ENCODE measurements at regions of chr17 and their contacts with region 1.

Region 1: GRCh38 chr17:39980351-39981206 is at the start of gene PSMD3:
- DNase-seq: peak; percentile 99
- H3K4me3 Mint-ChIP-seq: peak within 1 kb of the TSS; percentile 95
- H3K27ac Mint-ChIP-seq: peak within 1 kb of the TSS; percentile 88
- H3K4me1 Mint-ChIP-seq: peaks cover 30% of the 10 kb centered on the region
- H3K27me3 Mint-ChIP-seq: peaks cover 6% of the 10 kb centered on the region
- total RNA-seq, gene PSMD3: 120 to 124 TPM

Region 2: DNA sequence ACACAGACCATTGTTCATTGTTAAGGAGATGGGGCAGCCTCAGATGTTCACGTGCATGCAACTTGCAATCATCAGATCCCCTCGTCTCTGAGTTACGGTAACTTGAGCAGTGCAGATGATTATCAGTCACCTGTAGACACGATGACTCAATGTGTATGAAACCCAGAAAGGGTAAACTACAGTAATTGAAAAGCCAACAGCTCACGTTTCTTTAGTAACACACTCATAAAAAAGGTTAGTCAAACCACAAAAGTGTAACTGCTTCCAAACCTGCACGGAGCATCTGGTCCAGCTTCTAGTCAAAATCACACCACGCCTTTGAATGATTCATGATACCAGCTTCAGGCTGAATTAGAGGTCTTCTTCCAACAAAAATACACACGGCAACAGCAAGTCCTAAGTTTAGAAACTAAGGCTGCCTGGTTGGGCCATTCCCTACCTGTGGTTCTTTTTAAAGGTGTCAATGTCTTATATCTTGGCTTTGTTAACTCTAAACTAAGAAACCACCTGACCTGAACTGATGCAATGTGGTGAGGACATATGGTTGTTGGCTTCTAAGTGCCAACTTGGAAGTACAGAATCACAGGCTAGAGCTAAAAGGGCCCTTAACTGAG is 210.5 kb before region 1 on chr17:
- CTCF ChIA-PET with region 1: no interaction called
- POLR2A ChIA-PET with region 1: no interaction called
- intact Hi-C with region 1: loop called (anchors 5 kb)
- DNase-seq: peak; percentile 82
- H3K4me3 Mint-ChIP-seq: no peak overlapping the region
- H3K27ac Mint-ChIP-seq: peak overlapping the region; percentile 85
- H3K4me1 Mint-ChIP-seq: peaks cover 96% of the 10 kb centered on the region
- H3K27me3 Mint-ChIP-seq: no peaks in the 10 kb centered on the region

Region 3: DNA sequence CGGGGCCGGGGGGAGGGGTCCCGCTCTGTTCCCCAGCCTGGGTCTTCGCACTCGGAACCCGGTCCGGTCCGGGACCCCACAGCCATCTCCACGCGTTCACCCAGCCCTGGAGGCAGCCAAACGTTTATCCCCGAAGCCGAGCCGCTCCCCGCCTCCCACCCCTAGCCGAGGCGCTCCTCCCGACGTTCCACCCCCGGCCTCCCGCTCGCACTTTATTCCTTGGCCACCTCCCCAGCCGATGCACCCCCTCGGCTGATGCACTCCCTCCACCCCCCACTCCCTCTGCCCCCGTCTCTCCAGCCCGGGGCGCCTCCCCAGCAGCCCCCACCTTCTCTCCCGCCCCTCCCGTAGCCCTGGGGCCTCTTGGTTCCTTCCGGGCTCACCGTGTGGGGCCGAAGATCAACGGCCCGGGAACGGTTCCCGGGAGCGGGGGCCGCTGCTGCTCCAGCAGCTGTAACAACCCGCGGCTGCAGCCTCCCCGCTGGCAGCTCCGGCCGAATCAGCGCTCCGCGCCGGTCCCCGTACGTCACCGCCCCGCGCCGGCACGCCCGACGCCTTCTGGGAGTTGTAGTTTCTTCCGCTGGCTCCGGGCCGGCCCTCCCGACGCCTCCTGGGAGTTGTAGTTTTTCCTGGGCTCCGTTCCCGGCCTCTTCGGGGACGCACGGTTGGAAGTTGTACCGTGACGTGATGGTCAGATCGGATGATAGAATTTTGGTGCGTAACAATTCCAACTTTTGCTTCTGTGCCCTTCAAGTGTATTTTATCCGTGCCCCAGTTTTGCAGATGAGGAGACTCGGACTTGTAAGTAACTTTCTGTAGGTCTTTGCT is 53.3 kb before region 1 on chr17 and contains the starts of genes LRRC3C and ORMDL3:
- CTCF ChIA-PET with region 1: no interaction called
- POLR2A ChIA-PET with region 1: interaction called, 6 read pairs
- intact Hi-C with region 1: loop called (anchors 1 kb)
- DNase-seq: peak; percentile 95
- H3K4me3 Mint-ChIP-seq: peak within 1 kb of the TSS; percentile 85
- H3K27ac Mint-ChIP-seq: peak within 1 kb of the TSS; percentile 90
- H3K4me1 Mint-ChIP-seq: peaks cover 52% of the 10 kb centered on the region
- H3K27me3 Mint-ChIP-seq: no peaks in the 10 kb centered on the region
- total RNA-seq, gene LRRC3C: not detected
- total RNA-seq, gene ORMDL3: 53.7 to 58.3 TPM

Region 4: DNA sequence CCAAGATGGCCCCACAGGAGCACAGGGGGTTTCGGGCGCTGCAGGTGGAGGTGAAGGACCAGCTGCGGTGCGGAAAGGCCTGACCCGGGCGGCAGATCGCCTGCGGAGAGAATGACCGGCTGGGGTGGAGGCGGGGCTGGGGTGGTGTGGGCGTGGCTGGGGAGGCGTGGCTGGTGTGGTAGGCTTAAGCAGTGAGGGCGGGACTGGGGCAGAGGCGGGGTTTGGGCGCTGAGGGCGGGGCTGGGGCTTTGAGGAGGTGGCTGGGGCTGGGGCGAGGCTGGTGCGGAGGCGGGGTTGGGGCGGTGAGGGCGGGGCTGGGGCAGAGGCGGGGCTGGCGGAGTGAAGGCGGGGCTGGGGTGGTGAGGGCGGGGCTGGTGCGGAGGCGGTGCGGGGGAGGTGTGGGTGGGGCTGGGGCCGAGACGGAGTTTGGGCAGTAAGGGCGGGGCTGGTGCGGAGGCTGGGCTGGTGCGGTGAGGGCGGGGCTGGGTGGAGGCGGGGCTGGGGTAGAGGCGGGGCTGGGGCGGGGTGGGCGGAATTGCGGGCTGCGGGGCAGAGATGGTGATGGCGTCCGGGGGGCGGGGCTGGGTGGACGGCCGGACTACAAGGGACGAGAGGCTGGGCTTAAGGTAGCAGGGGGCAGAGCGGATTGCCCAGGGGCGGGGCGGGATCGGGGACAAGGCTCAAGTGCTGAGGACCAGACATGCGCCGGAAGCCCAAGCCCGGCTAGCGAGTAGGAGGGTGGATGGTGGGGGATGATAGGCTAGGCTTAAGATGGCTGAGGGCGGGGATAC is 27.7 kb before region 1 on chr17:
- CTCF ChIA-PET with region 1: interaction called, 77 read pairs
- POLR2A ChIA-PET with region 1: no interaction called
- intact Hi-C with region 1: loop called (anchors 1 kb)
- DNase-seq: peak; percentile 98
- H3K4me3 Mint-ChIP-seq: peak overlapping the region; percentile 76
- H3K27ac Mint-ChIP-seq: peak overlapping the region; percentile 73
- H3K4me1 Mint-ChIP-seq: peaks cover 6% of the 10 kb centered on the region
- H3K27me3 Mint-ChIP-seq: no peaks in the 10 kb centered on the region

Region 5: DNA sequence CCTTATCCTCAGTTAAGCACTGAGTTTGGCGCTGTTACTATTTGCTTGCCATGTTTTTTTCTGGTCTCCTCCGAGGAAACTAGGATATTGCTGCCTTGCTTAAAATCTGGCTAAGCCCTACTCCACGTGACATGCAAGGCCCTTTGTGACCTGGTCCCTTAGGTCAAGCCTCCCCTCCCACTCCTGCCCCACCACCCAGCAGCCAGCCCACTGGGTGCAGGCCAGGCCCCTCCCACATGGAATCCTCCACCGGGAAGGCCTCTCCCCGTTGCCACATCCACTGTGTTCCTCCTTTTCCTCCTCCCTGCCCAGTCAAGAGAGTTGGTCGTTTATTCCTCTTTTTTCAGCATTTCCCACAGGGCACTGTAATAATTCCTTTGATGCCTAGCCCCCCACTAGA is 16.2 kb after region 1 on chr17:
- CTCF ChIA-PET with region 1: no interaction called
- POLR2A ChIA-PET with region 1: no interaction called
- intact Hi-C with region 1: no loop called
- DNase-seq: no peak
- H3K4me3 Mint-ChIP-seq: no peak overlapping the region
- H3K27ac Mint-ChIP-seq: no peak overlapping the region
- H3K4me1 Mint-ChIP-seq: peaks cover 5% of the 10 kb centered on the region
- H3K27me3 Mint-ChIP-seq: no peaks in the 10 kb centered on the region

Region 6: GRCh38 chr17:40098846-40099618 is 118.5 kb after region 1 on chr17:
- CTCF ChIA-PET with region 1: interaction called, 5 read pairs
- POLR2A ChIA-PET with region 1: interaction called, 5 read pairs
- intact Hi-C with region 1: loop called (anchors 1 kb)
- DNase-seq: peak; percentile 99
- H3K4me3 Mint-ChIP-seq: peak overlapping the region; percentile 88
- H3K27ac Mint-ChIP-seq: peak overlapping the region; percentile 91
- H3K4me1 Mint-ChIP-seq: peaks cover 85% of the 10 kb centered on the region
- H3K27me3 Mint-ChIP-seq: no peaks in the 10 kb centered on the region

Measured in activated CD4-positive, alpha-beta memory T cell treated with anti-CD3 and anti-CD28 coated beads for 36 hours (primary cell).